Naive thymus-derived CD8-positive, alpha-beta T cell (primary cell): ENCODE measurements at regions of chr3 and their contacts with region 1.

Region 1: DNA sequence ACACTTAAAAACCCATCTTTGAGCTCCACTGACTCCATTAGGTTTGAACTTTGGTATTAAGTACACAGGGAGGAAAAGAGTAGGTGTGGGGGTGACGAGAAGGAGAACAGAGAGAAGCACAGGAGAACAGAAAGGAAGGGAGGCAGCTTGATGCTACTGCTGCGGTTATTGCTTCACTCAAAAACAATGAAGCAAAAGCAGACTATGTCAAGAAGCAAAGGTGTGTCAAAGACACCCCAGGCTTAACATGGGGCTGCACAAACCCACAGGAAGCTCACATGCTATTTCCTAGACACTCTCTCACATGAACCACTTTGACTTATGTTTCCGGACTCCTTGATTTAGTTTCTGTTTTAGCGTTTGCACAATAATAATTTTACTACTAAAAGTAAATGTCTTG is 961.0 kb upstream of the CFAP20DC start:
- DNase-seq: peak; percentile 17 to 89 (median 70)
- ATAC-seq: peak; percentile 96 to 97
- H3K4me3 Mint-ChIP-seq: peak overlapping the region; percentile 73 to 90 (median 86)
- H3K27ac Mint-ChIP-seq: peak overlapping the region; percentile 87 to 99 (median 96)
- H3K4me1 Mint-ChIP-seq: peaks cover 38 to 89% (median 84%) of the 10 kb centered on the region in 4 donors
- H3K27me3 Mint-ChIP-seq: no peaks in the 10 kb centered on the region

Region 2: GRCh38 chr3:59374818-59375211 is 636.0 kb before region 1 on chr3:
- POLR2A ChIA-PET with region 1: no interaction called
- DNase-seq: no peak
- ATAC-seq: no peak
- H3K4me3 Mint-ChIP-seq: no peak overlapping the region
- H3K27ac Mint-ChIP-seq: no peak overlapping the region
- H3K4me1 Mint-ChIP-seq: peaks cover 0 to 6% (median 3%) of the 10 kb centered on the region in 4 donors
- H3K27me3 Mint-ChIP-seq: no peaks in the 10 kb centered on the region

Region 3: GRCh38 chr3:59957150-59957549 is 53.6 kb before region 1 on chr3:
- POLR2A ChIA-PET with region 1: no interaction called
- DNase-seq: no peak
- ATAC-seq: no peak
- H3K4me3 Mint-ChIP-seq: no peak overlapping the region
- H3K27ac Mint-ChIP-seq: peak overlapping the region in 1 of 10 donors; percentile 11
- H3K4me1 Mint-ChIP-seq: peaks cover 11 to 46% (median 26%) of the 10 kb centered on the region in 4 donors
- H3K27me3 Mint-ChIP-seq: no peaks in the 10 kb centered on the region

Region 4: DNA sequence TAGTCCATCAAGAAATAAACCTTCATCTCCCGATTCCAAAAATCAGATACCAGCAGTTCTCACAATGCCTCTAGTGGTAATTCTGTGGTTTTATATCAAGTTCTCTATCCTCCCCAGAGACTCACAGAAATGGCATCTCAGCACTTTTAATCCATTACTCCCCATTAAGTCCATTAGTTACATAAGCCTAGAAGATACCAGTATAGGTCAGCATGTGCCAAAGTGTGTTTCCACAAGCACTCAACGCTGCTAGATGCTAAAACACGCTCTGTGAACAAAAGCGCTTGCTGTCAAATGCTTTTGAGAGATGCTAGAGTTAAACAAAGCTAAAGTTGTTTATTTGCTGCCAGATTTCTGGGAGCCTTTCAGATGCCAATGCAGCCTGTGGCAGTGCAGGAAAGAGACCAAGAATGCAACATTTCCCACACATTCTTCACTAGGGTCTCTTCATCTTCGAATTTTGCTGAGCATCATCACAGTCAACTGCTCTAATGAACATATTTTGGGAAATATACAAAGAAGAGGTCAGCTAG is 42.2 kb before region 1 on chr3:
- POLR2A ChIA-PET with region 1: no interaction called
- DNase-seq: no peak
- ATAC-seq: no peak
- H3K4me3 Mint-ChIP-seq: no peak overlapping the region
- H3K27ac Mint-ChIP-seq: no peak overlapping the region
- H3K4me1 Mint-ChIP-seq: peaks cover 5 to 17% (median 11%) of the 10 kb centered on the region in 4 donors
- H3K27me3 Mint-ChIP-seq: no peaks in the 10 kb centered on the region

Region 5: DNA sequence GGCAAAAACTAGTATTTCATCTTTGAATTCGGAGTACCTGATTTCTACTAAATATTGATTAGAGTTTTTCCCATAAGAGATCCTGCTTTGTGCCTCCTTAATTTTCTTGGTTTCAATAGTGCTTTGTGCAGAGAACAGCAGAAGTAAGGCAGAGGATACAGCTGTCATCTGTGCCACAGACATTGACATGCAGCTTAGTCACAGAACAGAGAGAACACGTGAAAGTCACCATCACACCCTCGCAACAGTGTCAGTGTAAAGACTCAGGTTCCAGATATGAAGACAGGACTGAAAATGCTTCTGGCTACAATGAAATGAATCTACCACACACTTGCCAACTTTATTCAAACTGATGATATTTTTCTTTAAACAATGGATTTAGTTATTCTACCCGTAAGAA is 18.2 kb before region 1 on chr3:
- POLR2A ChIA-PET with region 1: interaction called, 11 read pairs
- DNase-seq: no peak
- ATAC-seq: no peak
- H3K4me3 Mint-ChIP-seq: peak overlapping the region in 2 of 10 donors; percentile 40 to 60
- H3K27ac Mint-ChIP-seq: peak overlapping the region in 6 of 10 donors; percentile 4 to 77 (median 46)
- H3K4me1 Mint-ChIP-seq: peaks cover 41 to 85% (median 65%) of the 10 kb centered on the region in 4 donors
- H3K27me3 Mint-ChIP-seq: no peaks in the 10 kb centered on the region

Region 6: DNA sequence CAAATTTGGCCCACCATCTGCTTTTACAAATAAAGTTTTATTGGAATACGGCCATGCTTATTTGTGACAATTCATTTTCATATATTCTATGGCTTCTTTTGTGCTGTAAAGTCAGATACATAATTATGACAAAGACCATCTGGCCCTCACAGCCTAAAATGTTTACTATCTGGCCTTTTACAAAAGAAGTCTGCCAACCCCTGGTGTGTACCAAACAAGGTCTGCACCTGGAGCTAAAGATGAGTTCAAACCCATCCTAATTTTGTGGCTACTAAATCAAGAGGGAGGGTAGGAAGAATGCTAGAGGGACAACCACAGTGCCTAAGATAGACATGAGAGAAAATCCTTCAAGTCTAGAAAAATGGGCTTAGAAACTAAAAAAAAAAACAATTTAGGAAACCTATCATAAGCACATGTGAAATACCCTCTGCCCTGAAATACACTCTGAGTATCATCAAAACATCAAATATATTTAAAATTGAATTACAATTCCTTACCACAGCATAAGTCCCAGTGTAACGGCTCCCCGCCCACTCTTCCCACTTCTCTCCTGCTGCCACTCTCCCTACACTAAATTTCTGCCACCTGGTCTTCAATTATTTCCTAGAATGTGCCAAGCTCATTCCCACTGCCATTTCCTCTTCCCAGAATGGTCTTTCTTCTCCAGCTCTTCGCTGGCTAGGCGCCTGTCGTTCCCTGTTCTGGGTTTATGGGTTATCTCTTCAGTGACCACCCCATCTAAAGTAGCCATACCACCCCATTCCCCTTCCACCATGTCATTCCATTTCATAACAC is 10.3 kb before region 1 on chr3:
- POLR2A ChIA-PET with region 1: interaction called, 16 read pairs
- DNase-seq: no peak
- ATAC-seq: no peak
- H3K4me3 Mint-ChIP-seq: peak overlapping the region in 3 of 10 donors; percentile 8 to 41 (median 36)
- H3K27ac Mint-ChIP-seq: peak overlapping the region in 6 of 10 donors; percentile 5 to 90 (median 40)
- H3K4me1 Mint-ChIP-seq: peaks cover 31 to 63% (median 51%) of the 10 kb centered on the region in 4 donors
- H3K27me3 Mint-ChIP-seq: no peaks in the 10 kb centered on the region

Region 7: GRCh38 chr3:60046210-60046609 is 35.4 kb after region 1 on chr3:
- POLR2A ChIA-PET with region 1: no interaction called
- DNase-seq: no peak
- ATAC-seq: no peak
- H3K4me3 Mint-ChIP-seq: no peak overlapping the region
- H3K27ac Mint-ChIP-seq: peak overlapping the region in 5 of 10 donors; percentile 9 to 71 (median 40)
- H3K4me1 Mint-ChIP-seq: peaks cover 20 to 26% (median 22%) of the 10 kb centered on the region in 4 donors
- H3K27me3 Mint-ChIP-seq: no peaks in the 10 kb centered on the region